Activated CD4-positive, alpha-beta T cell treated with anti-CD3 and anti-CD28 coated beads, Interleukin-2, amount 10 ng/mL, durations not matched to agents 24 days and 14 days (primary cell): ENCODE measurements at regions of chr19 and their contacts with region 1.

Region 1: DNA sequence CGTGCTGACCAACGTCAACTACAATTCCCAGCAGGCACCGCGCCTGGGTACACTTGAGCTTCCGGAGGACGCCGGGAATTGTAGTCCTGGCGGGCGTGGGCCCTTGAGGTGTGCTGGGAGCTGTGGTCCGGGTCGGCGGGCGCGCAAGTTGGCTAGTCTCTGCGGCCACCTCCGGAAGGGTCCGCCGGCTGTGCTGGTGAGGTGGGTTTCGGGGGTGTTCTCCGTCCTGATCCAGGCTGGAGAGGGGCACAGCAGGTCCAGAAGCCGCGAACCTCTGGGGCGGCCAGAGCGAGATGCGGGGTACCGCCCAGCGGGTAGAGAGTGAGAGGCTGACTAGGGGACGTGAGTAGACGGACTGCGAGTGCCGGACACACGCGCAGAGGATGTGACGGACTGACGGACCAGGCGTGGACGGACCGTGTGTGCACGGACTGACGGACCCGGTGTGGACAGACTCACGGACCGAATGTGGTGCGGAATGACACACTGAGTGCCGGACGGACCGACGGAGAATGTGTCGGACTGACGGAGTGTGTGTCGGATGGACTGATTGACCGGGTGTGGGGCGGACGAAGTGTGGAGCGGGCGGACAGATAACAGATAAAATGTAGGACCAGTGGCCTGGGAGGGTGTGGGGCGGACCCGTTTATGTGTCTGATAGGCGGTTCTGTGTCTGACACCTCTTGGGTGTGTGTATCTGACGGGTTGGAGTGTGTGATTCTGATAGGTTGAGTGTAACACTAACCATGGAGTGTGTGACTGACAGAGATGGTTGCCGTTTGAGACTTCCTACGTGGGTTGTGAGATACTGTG is at the start of gene ZSCAN22:
- DNase-seq: peak; percentile 97
- H3K4me3 Mint-ChIP-seq: no peak within 1 kb of the TSS
- H3K27ac Mint-ChIP-seq: no peak within 1 kb of the TSS
- H3K4me1 Mint-ChIP-seq: peaks cover 5% of the 10 kb centered on the region
- H3K27me3 Mint-ChIP-seq: no peaks in the 10 kb centered on the region
- total RNA-seq, gene ZSCAN22: 4.2 and 4.6 TPM in 2 replicates

Region 2: DNA sequence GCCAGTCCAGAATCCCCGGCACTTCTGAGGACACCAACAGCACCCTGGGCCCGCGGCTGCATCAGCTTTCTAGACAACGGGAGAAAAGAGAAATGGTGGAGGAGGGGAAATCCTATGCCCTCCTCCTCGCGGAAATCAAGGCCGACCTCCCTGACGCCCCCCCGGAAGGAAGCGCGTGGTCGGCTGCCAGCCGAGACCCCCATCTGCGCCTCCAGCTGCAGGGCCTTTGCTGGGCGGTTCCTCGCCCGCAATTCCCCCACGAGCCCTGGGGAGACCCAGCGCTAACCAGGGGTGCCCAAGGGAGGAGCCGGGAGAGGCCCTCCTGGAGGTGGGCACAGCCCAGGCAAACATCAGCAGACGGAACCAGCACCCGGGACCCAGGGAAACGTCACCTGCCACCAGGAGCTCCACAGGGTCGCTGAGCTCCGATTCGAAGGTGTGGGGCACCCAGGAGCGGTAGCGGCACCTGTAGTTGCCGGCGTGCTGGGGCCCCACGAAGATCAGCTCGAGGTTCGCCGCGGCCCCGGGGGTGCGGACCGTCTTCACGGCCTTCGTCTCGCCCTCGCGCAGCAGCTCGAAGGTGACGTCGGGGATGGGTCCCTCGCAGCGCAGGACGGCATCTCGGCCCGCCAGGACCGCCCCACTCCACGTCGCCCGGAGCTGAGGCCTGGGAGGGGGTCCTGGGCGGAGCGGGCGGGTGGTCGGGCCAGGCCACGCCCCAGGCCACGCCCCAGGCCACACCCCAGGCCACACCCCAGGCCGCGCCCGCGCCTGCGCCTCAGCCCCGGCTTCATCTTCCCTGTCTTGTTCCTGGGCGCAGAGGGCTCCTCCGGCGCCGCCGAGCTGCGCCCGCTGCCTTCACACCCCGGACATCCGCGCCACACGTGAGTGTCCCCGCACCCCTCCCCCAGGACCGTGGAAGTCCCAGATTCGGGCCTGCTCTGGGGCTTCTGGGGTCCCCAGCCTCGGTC is 20.1 kb after region 1 on chr19:
- intact Hi-C with region 1: loop called (anchors 1 kb)
- DNase-seq: peak; percentile 91
- H3K4me3 Mint-ChIP-seq: peak overlapping the region; percentile 98
- H3K27ac Mint-ChIP-seq: peak overlapping the region; percentile 86
- H3K4me1 Mint-ChIP-seq: peaks cover 16% of the 10 kb centered on the region
- H3K27me3 Mint-ChIP-seq: no peaks in the 10 kb centered on the region

Region 3: GRCh38 chr19:58380722-58381466 is 53.8 kb after region 1 on chr19 and contains the start of gene ZNF837:
- intact Hi-C with region 1: loop called (anchors 1 kb)
- DNase-seq: peak; percentile 99
- H3K4me3 Mint-ChIP-seq: peak within 1 kb of the TSS; percentile 97
- H3K27ac Mint-ChIP-seq: peak within 1 kb of the TSS; percentile 94
- H3K4me1 Mint-ChIP-seq: peaks cover 21% of the 10 kb centered on the region
- H3K27me3 Mint-ChIP-seq: no peaks in the 10 kb centered on the region
- total RNA-seq, gene ZNF837: 0.89 and 1.1 TPM in 2 replicates

Region 4: DNA sequence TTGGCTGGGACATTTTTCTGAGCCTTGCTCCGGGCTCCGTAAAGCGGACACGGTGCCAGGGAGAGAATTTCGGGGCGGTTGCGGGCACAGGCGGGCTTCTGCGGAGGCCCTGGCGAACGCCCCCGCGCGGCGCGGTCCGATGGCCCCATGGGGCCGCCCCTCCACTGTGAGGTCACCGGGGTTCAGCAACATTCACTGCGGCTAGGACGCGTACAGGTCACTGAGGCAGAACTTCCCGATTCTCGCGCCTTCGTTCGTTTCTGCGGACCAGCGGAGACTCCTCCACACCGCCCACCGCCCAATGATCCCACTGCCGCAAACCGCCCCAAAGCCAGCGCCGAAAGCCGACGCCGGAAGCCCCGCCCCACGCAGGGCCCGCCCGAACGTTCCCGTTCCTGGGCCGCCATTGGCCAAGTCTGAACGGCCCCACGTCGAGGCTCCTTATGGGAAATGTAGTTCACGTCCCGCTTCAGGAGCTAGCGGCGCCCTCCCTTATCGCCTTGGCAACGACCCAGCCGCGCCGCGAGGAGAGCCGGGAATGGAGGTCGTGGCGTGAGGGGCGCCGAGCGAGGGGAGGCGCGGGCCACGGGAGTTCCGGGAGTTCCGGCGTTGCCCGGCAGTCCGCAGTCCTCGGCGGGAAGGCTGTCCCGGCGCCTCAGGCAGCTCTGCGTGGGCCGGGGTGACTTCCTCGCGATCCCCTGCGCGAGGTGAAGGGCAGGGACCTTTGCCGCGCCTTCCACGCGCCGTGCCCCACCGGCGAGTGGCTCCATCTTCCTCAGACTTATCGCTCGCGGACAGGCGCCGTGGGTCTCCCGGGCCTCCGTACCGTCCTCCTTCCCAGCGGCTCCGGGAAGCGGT is 81.3 kb after region 1 on chr19 and contains the start of gene ZNF584:
- intact Hi-C with region 1: loop called (anchors 1 kb)
- DNase-seq: peak; percentile 98
- H3K4me3 Mint-ChIP-seq: peak within 1 kb of the TSS; percentile 88
- H3K27ac Mint-ChIP-seq: peak within 1 kb of the TSS; percentile 92
- H3K4me1 Mint-ChIP-seq: peaks cover 32% of the 10 kb centered on the region
- H3K27me3 Mint-ChIP-seq: no peaks in the 10 kb centered on the region
- total RNA-seq, gene ZNF584: 17.4 and 17.7 TPM in 2 replicates

Region 5: GRCh38 chr19:58466760-58467589 is 139.9 kb after region 1 on chr19 and contains the start of gene ZNF324:
- intact Hi-C with region 1: loop called (anchors 2 kb)
- DNase-seq: peak; percentile 100
- H3K4me3 Mint-ChIP-seq: peak within 1 kb of the TSS; percentile 89
- H3K27ac Mint-ChIP-seq: peak within 1 kb of the TSS; percentile 84
- H3K4me1 Mint-ChIP-seq: peaks cover 15% of the 10 kb centered on the region
- H3K27me3 Mint-ChIP-seq: peaks cover 2% of the 10 kb centered on the region
- total RNA-seq, gene ZNF324: 13.6 and 14.7 TPM in 2 replicates